CD8-positive, alpha-beta memory T cell (primary cell): ENCODE measurements at regions of chr14 and their contacts with region 1.

Region 1: GRCh38 chr14:61438860-61439684 is 117.7 kb downstream of the PRKCH start:
- DNase-seq: peak; percentile 25 to 70 (median 46)
- H3K4me3 ChIP-seq: peak overlapping the region; percentile 52
- H3K4me3 Mint-ChIP-seq: peak overlapping the region; percentile 66 to 92 (median 85)
- H3K27ac ChIP-seq: no peak overlapping the region
- H3K27ac Mint-ChIP-seq: peak overlapping the region; percentile 76 to 99 (median 94)
- H3K4me1 ChIP-seq: peaks cover 97% of the 10 kb centered on the region
- H3K4me1 Mint-ChIP-seq: peaks cover 91 to 98% (median 96%) of the 10 kb centered on the region in 3 donors
- H3K27me3 ChIP-seq: no peaks in the 10 kb centered on the region
- H3K27me3 Mint-ChIP-seq: no peaks in the 10 kb centered on the region

Region 2: GRCh38 chr14:61456720-61457119 is 17.6 kb after region 1 on chr14:
- CTCF ChIA-PET with region 1: interaction called, 12 read pairs
- POLR2A ChIA-PET with region 1: interaction called, 3 read pairs
- DNase-seq: peak; percentile 72 to 87 (median 77)
- H3K4me3 ChIP-seq: no peak overlapping the region
- H3K4me3 Mint-ChIP-seq: peak overlapping the region in 2 of 7 donors; percentile 34 to 64
- H3K27ac ChIP-seq: no peak overlapping the region
- H3K27ac Mint-ChIP-seq: peak overlapping the region; percentile 81 to 94 (median 91)
- H3K4me1 ChIP-seq: peaks cover 64% of the 10 kb centered on the region
- H3K4me1 Mint-ChIP-seq: peaks cover 80 to 93% (median 87%) of the 10 kb centered on the region in 3 donors
- H3K27me3 ChIP-seq: no peaks in the 10 kb centered on the region
- H3K27me3 Mint-ChIP-seq: peaks cover 0 to 11% of the 10 kb centered on the region in 2 donors

Region 3: DNA sequence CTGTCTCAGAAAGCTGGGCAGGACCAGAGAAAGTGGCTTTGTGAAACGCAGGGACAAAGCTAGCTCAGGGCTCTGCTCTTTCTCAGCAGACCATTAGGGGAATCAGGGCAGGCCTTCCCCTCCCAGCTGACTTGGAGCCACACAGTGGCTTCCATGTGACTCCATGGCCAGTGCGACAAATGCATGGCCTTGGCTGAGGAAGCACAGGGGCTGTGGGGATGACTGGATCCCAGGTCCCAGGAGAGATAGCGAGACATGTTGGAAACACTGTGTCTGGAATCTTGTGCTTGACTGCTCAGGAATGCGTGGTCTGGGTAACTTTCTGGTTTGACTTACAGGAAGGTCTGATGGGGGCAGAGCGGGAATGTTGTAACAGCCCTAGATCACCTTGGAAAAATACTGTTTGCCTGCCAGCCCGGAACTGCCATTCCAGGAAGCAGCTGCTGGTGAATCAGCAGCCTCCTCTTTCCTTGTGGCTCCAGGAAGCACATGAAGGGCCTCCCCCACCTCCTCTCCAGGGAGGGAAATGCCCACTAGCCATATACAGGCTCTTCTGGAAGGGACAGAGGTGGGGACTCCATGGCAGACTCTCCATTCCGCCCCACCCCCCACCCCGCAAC is 122.7 kb after region 1 on chr14:
- CTCF ChIA-PET with region 1: no interaction called
- POLR2A ChIA-PET with region 1: no interaction called
- DNase-seq: no peak
- H3K4me3 ChIP-seq: no peak overlapping the region
- H3K4me3 Mint-ChIP-seq: no peak overlapping the region
- H3K27ac ChIP-seq: no peak overlapping the region
- H3K27ac Mint-ChIP-seq: peak overlapping the region in 3 of 8 donors; percentile 24 to 54 (median 51)
- H3K4me1 ChIP-seq: peaks cover 7% of the 10 kb centered on the region
- H3K4me1 Mint-ChIP-seq: peaks cover 10 to 20% (median 15%) of the 10 kb centered on the region in 3 donors
- H3K27me3 ChIP-seq: no peaks in the 10 kb centered on the region
- H3K27me3 Mint-ChIP-seq: no peaks in the 10 kb centered on the region